CD8-positive, alpha-beta T cell (primary cell): ENCODE measurements at regions of chr15 and their contacts with region 1.

Region 1: GRCh38 chr15:85296615-85297402 is 83.6 kb upstream of the AKAP13 start:
- DNase-seq: peak; percentile 48 to 84 (median 67)
- ATAC-seq: peak; percentile 99
- H3K4me3 ChIP-seq: no peak overlapping the region
- H3K4me3 Mint-ChIP-seq: peak overlapping the region; percentile 59
- H3K27ac ChIP-seq: no peak overlapping the region
- H3K27ac Mint-ChIP-seq: no peak overlapping the region
- H3K4me1 ChIP-seq: no peaks in the 10 kb centered on the region
- H3K4me1 Mint-ChIP-seq: peaks cover 10% of the 10 kb centered on the region
- H3K27me3 ChIP-seq: no peaks in the 10 kb centered on the region
- H3K27me3 Mint-ChIP-seq: peaks cover under 1% of the 10 kb centered on the region
- CTCF ChIP-seq: peak; percentile 74

Region 2: DNA sequence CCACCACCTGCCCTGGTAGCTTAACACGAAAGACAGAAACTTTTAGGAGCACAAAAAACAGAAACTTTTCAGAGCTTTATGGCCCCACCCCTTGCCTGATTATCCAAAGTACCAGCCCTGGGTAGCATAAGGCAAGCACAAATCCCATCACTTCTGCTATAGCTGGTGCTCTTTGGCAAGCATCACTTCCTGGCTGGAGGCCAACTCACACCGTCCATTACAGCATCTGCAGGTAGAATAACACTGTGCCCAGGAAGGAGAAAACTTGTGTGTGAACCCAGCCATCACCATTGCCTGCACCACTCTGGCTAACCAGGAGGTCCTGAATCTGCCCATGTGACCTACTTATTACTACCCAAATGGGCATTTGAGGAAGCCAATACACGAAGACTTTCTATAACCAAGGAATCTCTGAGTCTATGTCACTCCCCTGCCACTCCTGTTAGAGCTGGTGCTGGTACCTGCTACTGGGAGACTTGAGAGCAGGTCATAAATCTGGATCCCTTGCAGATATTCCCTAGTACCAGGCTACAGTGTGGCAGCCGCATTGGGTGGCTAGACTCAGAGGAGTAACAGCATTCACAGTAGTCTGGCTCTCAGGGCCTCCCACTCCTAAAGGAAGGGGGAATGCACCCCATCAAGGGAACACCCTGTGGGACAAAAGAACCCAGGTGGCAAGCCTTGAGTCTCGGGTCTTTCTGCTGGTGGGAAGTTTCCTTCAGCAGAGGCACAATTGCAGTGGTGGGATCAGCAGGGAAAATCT is 10.3 kb after region 1 on chr15:
- CTCF ChIA-PET with region 1: interaction called, 18 read pairs
- POLR2A ChIA-PET with region 1: no interaction called
- intact Hi-C with region 1: no loop called
- DNase-seq: no peak
- ATAC-seq: no peak
- H3K4me3 ChIP-seq: no peak overlapping the region
- H3K4me3 Mint-ChIP-seq: no peak overlapping the region
- H3K27ac ChIP-seq: no peak overlapping the region
- H3K27ac Mint-ChIP-seq: no peak overlapping the region
- H3K4me1 ChIP-seq: no peaks in the 10 kb centered on the region
- H3K4me1 Mint-ChIP-seq: peaks cover 9% of the 10 kb centered on the region
- H3K27me3 ChIP-seq: no peaks in the 10 kb centered on the region
- H3K27me3 Mint-ChIP-seq: no peaks in the 10 kb centered on the region
- CTCF ChIP-seq: no peak

Region 3: DNA sequence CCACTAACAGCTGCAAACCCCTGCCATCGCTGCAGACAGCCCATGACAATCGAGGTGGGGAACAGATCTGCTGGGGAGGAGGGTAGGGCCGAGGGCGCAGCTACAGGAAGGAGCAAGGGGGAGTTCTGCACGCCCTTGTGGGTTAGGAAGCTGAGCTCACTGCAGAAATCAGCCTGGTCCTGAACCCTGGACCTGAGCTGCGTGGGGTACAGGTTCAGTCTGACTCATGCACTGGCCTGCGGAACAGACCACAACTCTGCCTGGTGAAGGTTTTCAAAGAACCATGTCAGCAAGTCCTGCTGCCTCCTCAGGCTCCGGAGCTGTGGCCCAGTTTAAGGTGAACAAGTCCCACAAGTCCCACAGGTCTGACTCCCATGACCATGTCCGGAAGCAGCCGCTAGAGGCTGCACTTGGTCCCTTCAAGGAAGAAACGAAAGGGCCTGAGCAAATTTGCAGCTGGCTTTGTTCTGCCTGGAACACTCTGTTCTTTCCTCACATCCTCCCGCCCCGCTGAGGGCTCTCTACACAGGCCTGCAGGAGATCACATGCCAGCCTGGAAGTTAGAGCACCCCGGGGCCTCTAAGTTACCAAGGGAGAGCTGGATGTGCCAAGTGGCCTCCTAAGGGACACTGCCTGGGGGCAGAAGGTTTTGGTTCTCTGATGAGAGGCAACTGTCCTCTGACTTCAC is 34.2 kb after region 1 on chr15:
- CTCF ChIA-PET with region 1: interaction called, 34 read pairs
- POLR2A ChIA-PET with region 1: interaction called, 5 read pairs
- intact Hi-C with region 1: loop called in 1 of 2 experiments (anchors 2 kb)
- DNase-seq: peak; percentile 37 to 86 (median 71)
- ATAC-seq: peak; percentile 77
- H3K4me3 ChIP-seq: peak overlapping the region; percentile 42 to 55
- H3K4me3 Mint-ChIP-seq: peak overlapping the region; percentile 92
- H3K27ac ChIP-seq: peak overlapping the region; percentile 14 to 58
- H3K27ac Mint-ChIP-seq: peak overlapping the region; percentile 93
- H3K4me1 ChIP-seq: peaks cover 26% of the 10 kb centered on the region
- H3K4me1 Mint-ChIP-seq: peaks cover 48% of the 10 kb centered on the region
- H3K27me3 ChIP-seq: no peaks in the 10 kb centered on the region
- H3K27me3 Mint-ChIP-seq: no peaks in the 10 kb centered on the region
- CTCF ChIP-seq: peak; percentile 43

Region 4: GRCh38 chr15:85480923-85481322 is 184.1 kb after region 1 on chr15:
- CTCF ChIA-PET with region 1: interaction called, 7 read pairs
- POLR2A ChIA-PET with region 1: no interaction called
- intact Hi-C with region 1: loop called (anchors 2 to 5 kb)
- DNase-seq: no peak
- ATAC-seq: no peak
- H3K4me3 ChIP-seq: no peak overlapping the region
- H3K4me3 Mint-ChIP-seq: no peak overlapping the region
- H3K27ac ChIP-seq: no peak overlapping the region
- H3K27ac Mint-ChIP-seq: no peak overlapping the region
- H3K4me1 ChIP-seq: peaks cover 57% of the 10 kb centered on the region
- H3K4me1 Mint-ChIP-seq: peaks cover 80% of the 10 kb centered on the region
- H3K27me3 ChIP-seq: no peaks in the 10 kb centered on the region
- H3K27me3 Mint-ChIP-seq: no peaks in the 10 kb centered on the region
- CTCF ChIP-seq: no peak

Region 5: DNA sequence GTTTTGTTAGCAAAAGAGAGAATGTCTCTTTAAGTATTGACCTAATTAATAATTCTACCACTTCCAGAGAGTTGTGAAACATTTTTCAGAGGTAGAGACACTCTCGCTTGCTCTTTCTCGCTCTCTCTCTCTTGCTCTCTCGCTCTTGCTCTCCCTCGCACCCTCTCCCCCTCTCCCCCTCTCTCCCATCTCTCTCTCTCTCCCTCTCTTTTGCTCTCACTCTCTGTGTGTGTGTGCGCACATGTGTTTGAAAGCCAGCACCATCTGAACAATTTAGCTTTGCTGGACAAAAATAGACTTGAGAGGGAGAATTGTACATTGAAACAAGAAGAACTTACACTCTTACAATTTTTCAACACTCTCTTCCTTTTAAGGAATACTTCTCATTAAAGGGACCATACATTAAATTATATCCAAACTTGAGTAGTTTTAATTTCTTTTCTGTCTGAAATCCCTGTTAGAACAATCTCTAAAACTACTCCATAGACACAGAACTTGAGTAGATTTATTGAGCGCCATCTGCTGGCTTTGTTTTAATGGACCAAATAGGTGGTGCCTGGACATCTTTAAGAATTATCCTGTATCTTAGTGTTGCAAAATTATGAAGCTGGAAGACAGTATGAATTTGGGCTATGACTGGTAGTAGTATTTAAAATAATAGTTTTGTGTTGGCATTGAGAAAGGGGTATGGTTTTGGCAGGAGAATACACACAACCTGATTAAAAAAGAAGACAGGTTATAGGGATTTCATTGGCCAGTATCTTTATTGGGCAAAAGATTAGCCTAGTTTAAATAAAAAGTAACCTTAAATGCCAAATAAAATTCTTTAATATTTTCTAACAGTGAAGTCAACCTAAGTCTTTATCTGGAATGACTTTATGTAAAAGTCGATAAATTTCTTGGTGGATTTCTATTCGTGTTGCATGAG is 208.2 kb after region 1 on chr15:
- CTCF ChIA-PET with region 1: interaction called, 25 read pairs
- POLR2A ChIA-PET with region 1: no interaction called
- intact Hi-C with region 1: loop called (anchors 1 kb)
- DNase-seq: peak in 7 of 9 experiments; percentile 11 to 70 (median 51)
- ATAC-seq: no peak
- H3K4me3 ChIP-seq: no peak overlapping the region
- H3K4me3 Mint-ChIP-seq: no peak overlapping the region
- H3K27ac ChIP-seq: no peak overlapping the region
- H3K27ac Mint-ChIP-seq: no peak overlapping the region
- H3K4me1 ChIP-seq: peaks cover 33% of the 10 kb centered on the region
- H3K4me1 Mint-ChIP-seq: peaks cover 69% of the 10 kb centered on the region
- H3K27me3 ChIP-seq: no peaks in the 10 kb centered on the region
- H3K27me3 Mint-ChIP-seq: no peaks in the 10 kb centered on the region
- CTCF ChIP-seq: peak; percentile 84

Region 6: DNA sequence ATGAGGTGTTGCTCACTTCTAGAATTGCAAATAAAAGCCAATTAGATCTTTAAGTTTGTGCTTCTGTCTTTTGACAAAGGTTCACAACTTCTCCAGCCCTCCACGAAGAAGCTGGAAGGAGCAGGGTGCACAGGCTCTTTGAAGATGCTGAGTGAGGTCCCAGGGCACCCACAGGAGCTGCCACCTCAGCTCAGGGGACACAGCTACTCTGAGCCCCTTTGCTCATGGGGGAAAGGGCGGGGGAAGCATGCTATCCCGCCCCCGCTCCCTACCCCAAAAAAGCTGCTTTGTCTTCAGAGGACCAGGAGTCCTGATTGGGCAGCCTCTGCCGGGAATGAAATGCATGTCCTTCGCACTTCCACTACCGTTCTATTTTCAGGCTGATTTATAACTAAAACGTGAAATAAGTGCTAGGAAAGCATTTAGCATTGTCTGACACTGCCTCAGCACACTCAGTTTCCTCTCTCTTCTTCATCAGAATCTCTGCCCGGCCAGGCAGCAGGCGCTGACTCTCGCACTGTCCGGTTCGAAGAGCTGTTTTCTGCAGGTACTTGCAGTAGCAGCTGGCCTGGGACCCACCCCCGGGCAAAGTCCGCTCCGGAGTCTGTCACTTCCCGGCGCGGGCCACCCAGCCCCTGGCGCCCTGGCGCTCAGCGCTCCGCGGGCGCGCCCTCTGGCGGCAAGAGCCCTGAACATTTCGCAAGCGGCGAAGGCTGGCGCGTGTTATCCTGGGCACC is 543.4 kb after region 1 on chr15:
- CTCF ChIA-PET with region 1: interaction called, 7 read pairs
- POLR2A ChIA-PET with region 1: no interaction called
- intact Hi-C with region 1: loop called in 1 of 2 experiments (anchors 10 kb)
- DNase-seq: peak; percentile 62 to 90 (median 79)
- ATAC-seq: peak; percentile 94
- H3K4me3 ChIP-seq: peak overlapping the region; percentile 27 to 33
- H3K4me3 Mint-ChIP-seq: peak overlapping the region; percentile 68
- H3K27ac ChIP-seq: no peak overlapping the region
- H3K27ac Mint-ChIP-seq: no peak overlapping the region
- H3K4me1 ChIP-seq: peaks cover 4% of the 10 kb centered on the region
- H3K4me1 Mint-ChIP-seq: no peaks in the 10 kb centered on the region
- H3K27me3 ChIP-seq: no peaks in the 10 kb centered on the region
- H3K27me3 Mint-ChIP-seq: peaks cover 5% of the 10 kb centered on the region
- CTCF ChIP-seq: peak; percentile 93